ENCODE measurements at regions of chr16 and their contacts with region 1.

Region 1: DNA sequence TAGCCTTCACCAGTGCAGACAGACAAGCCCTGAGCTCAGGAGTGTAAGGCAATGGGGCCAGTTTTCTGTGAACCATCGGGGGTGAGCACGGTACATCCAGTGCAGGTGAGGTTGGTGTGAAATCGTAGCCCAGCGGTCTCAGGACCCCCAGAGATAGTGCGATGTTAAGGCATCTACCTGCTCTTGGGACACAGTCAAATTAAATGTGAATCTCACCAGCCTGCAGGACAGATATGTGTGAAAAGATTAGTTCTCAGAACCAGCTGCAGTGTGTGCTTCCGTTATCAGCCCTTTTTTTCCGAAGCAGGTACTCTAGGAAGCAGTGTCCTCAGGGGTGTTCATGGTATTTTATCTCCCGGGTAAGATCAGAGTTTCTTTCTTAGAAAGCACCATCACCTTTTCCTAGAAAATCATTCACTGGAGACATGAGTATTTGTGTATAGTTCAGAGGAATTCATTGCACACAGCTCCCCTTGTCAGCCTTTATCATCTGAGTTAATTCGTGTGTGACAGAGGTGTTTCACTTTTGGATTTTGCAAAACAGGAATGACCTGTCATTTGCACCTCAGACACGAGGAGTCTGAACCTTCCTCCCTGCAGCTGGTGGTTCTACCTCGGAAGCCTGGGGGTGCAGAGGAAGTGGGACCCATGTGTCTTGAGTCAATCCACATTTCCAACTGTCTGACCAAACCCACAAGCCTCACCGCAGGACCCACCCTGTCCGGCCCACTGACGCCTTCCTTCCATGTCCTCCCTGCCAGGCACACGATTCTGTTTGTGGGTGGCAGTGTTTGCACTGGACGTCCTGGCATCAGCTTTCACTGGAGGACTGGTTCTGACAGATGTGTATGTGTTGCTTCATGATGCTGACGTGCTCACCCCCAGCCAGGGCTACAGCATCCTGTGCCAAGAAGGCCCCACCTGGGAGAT is 107.8 kb downstream of the CLEC16A start:
- DNase-seq: peak; percentile 79 to 99 (median 98)
- H3K4me3 ChIP-seq: peak overlapping the region in 4 of 7 experiments; percentile 20 to 52 (median 44)
- H3K27ac ChIP-seq: no peak overlapping the region
- H3K4me1 ChIP-seq: peaks cover 11 to 56% (median 41%) of the 10 kb centered on the region in 4 experiments
- H3K27me3 ChIP-seq: peaks cover 0 to 16% (median 3%) of the 10 kb centered on the region in 5 experiments

Region 2: DNA sequence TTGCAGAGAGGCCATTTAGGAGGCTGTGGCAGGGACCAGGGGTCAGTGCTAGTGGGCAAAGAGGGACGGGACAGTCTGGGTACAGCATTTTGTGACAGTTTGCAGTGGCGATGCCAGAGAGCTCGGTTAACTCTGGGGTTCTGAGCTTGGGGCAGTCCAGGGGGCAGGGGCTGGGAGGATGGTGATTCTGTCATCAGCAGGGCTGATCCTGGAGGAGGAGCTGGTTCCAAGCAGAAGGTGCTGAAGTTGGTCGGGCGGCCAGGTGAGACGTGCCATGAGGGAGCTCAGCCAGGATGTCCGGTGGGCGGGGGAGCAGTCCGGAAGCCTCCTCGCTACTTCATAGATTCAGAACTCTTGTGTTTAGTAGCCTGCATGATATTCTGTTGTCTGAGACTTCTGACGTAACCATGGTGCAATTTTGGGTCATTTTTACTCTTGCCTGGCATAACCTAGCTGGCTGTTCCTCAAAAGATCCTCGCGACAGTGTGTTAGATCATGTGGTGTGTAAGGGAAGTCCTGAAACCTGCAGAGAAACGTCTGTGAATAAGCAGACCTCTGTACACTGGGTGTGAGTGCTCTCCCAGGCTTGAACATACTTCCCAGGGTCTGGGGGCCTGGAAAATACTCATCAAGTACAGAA is 14.2 kb after region 1 on chr16:
- CTCF ChIA-PET with region 1: interaction called, 11 read pairs
- POLR2A ChIA-PET with region 1: no interaction called
- DNase-seq: peak in 2 of 3 donors; percentile 60 to 73
- H3K4me3 ChIP-seq: no peak overlapping the region
- H3K27ac ChIP-seq: no peak overlapping the region
- H3K4me1 ChIP-seq: peaks cover 0 to 7% (median 5%) of the 10 kb centered on the region in 4 experiments
- H3K27me3 ChIP-seq: no peaks in the 10 kb centered on the region

Measured in common myeloid progenitor, CD34-positive (primary cell).